Activated naive CD4-positive, alpha-beta T cell treated with anti-CD3 and anti-CD28 coated beads for 36 hours (primary cell): ENCODE measurements at regions of chr2 and their contacts with region 1.

Region 1: GRCh38 chr2:191165176-191165643 is 14.4 kb upstream of the STAT4 start:
- DNase-seq: peak; percentile 46
- H3K4me3 Mint-ChIP-seq: no peak overlapping the region
- H3K27ac Mint-ChIP-seq: peak overlapping the region; percentile 65
- H3K4me1 Mint-ChIP-seq: peaks cover 21% of the 10 kb centered on the region
- H3K27me3 Mint-ChIP-seq: peaks cover 2% of the 10 kb centered on the region

Region 2: GRCh38 chr2:191148791-191149190 is 16.4 kb before region 1 on chr2:
- CTCF ChIA-PET with region 1: no interaction called
- intact Hi-C with region 1: no loop called
- DNase-seq: no peak
- H3K4me3 Mint-ChIP-seq: peak overlapping the region; percentile 91
- H3K27ac Mint-ChIP-seq: peak overlapping the region; percentile 97
- H3K4me1 Mint-ChIP-seq: peaks cover 56% of the 10 kb centered on the region
- H3K27me3 Mint-ChIP-seq: no peaks in the 10 kb centered on the region

Region 3: GRCh38 chr2:191218292-191218898 is 53.2 kb after region 1 on chr2:
- CTCF ChIA-PET with region 1: interaction called, 10 read pairs
- intact Hi-C with region 1: loop called (anchors 1 kb)
- DNase-seq: peak; percentile 67
- H3K4me3 Mint-ChIP-seq: no peak overlapping the region
- H3K27ac Mint-ChIP-seq: no peak overlapping the region
- H3K4me1 Mint-ChIP-seq: peaks cover 25% of the 10 kb centered on the region
- H3K27me3 Mint-ChIP-seq: no peaks in the 10 kb centered on the region

Region 4: DNA sequence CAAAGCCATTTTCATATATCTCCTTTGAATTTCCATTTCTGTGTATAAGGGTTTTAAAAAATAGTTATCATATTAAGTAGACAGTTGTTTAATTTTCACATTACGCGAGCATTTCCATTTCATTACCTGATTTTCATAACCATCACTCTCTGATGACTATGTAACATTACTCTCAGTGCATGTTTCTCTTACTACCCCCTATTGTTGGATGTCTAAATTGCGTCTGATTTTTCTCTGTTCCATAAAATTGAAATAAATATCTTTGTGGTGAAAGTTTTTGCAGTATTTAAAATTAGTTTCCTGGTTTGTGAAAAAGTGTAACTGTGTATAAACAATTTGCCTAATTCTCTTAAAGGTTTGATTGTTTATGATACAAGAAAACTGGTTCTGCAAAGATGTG is 203.8 kb after region 1 on chr2:
- CTCF ChIA-PET with region 1: interaction called, 5 read pairs
- intact Hi-C with region 1: loop called (anchors 1 kb)
- DNase-seq: no peak
- H3K4me3 Mint-ChIP-seq: no peak overlapping the region
- H3K27ac Mint-ChIP-seq: no peak overlapping the region
- H3K4me1 Mint-ChIP-seq: no peaks in the 10 kb centered on the region
- H3K27me3 Mint-ChIP-seq: no peaks in the 10 kb centered on the region

Region 5: DNA sequence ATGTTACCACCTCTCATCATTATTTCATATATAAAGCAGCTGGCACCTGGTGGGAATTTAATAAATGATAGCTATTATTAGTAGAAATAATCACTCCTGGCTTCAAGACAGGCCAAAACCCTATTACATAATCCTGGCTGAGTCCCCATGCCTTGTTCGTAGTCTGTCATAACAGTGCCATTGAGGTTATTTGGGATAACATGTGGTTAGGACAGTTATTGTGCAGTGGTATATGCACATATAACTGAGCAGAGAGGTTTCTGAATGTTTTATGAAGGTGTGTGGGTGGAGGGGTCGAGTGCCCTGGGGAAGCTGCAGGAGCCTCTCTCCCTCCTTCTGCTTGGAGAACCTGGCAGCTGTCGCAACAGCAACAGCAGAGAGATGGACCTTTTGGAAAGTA is 350.3 kb after region 1 on chr2:
- CTCF ChIA-PET with region 1: interaction called, 15 read pairs
- intact Hi-C with region 1: no loop called
- DNase-seq: no peak
- H3K4me3 Mint-ChIP-seq: no peak overlapping the region
- H3K27ac Mint-ChIP-seq: no peak overlapping the region
- H3K4me1 Mint-ChIP-seq: no peaks in the 10 kb centered on the region
- H3K27me3 Mint-ChIP-seq: no peaks in the 10 kb centered on the region

Region 6: GRCh38 chr2:191691016-191691735 is 526.0 kb after region 1 on chr2:
- CTCF ChIA-PET with region 1: no interaction called
- intact Hi-C with region 1: loop called (anchors 2 kb)
- DNase-seq: peak; percentile 73
- H3K4me3 Mint-ChIP-seq: no peak overlapping the region
- H3K27ac Mint-ChIP-seq: peak overlapping the region; percentile 72
- H3K4me1 Mint-ChIP-seq: peaks cover 66% of the 10 kb centered on the region
- H3K27me3 Mint-ChIP-seq: no peaks in the 10 kb centered on the region

Region 7: DNA sequence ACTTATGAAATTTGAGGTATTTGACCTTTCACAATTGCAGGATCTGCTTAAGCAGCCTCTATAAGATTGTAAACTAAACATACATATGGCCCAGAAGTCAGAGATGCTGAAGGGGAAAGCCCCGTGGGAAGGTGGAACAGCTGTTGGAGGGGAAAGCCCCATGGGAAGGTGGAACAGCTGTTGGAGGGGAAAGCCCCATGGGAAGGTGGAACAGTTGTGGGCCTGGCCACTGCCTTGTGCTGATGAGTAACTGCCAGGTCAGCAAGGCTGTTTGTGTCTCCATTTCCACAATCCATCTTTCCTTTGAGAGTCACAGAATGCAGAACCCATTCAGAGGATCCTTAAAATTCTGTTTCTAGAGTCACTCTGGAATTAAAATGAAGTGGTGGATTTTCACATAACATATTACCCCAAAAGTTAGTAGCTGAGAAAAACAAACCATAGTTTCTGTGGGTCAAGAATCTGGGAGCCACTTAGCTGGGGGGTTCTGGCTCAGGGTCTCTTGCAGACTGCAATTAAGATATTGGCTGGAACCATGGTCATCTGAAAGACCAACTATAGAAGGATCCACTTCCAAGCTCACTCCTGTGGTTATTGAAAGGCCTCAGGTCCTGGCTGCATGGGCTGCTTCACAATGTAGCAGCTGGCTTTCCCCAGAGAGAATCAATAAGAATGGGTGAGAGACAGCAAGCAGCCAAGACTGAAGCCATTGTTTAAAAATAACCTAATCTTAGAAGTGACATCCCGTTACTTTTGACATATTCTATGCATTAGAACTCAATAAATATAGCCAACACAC is 768.3 kb after region 1 on chr2:
- CTCF ChIA-PET with region 1: no interaction called
- intact Hi-C with region 1: no loop called
- DNase-seq: peak; percentile 64
- H3K4me3 Mint-ChIP-seq: no peak overlapping the region
- H3K27ac Mint-ChIP-seq: no peak overlapping the region
- H3K4me1 Mint-ChIP-seq: peaks cover 3% of the 10 kb centered on the region
- H3K27me3 Mint-ChIP-seq: peaks cover 13% of the 10 kb centered on the region